ENCODE measurements at regions of chr14 and their contacts with region 1.

Region 1: DNA sequence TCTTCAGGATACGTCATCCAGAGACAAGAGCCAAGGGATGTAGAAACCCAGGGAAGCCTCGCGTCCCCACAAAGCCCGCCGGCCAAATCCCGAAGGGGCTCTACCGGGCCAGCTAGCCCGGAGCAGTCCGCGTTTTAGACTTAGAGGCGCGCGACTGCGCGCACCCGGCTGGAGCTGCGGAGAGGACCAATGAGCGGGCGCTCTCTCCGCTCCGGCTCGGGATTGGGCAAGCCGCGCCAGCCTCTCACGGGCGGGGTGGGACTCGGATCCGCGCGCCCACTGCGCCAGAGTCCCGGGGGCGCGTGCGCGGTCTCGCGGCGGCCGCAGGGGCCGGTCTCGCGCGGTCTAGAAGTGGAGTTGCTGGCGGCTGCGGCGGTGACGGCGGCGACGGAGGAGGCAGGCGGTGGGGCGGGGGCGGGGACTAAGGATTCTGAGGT is 239 bp upstream of the PALS1 start:
- DNase-seq: peak; percentile 98
- H3K4me3 ChIP-seq: peak overlapping the region; percentile 74 to 88 (median 82)
- H3K27ac ChIP-seq: peak overlapping the region; percentile 97 to 99 (median 99)
- H3K4me1 ChIP-seq: peaks cover 0 to 26% (median 17%) of the 10 kb centered on the region in 4 donors
- H3K27me3 ChIP-seq: no peaks in the 10 kb centered on the region
- CTCF ChIP-seq: no peak
- EP300 ChIP-seq: no peak
- POLR2A ChIP-seq: peak; percentile 50 to 60

Region 2: GRCh38 chr14:66507722-66508546 is 733.1 kb before region 1 on chr14 and contains the start of gene GPHN:
- intact Hi-C with region 1: loop called (anchors 2 kb)
- DNase-seq: peak; percentile 98
- H3K4me3 ChIP-seq: peak within 1 kb of the TSS; percentile 52 to 97 (median 82)
- H3K27ac ChIP-seq: peak within 1 kb of the TSS; percentile 91 to 96 (median 93)
- H3K4me1 ChIP-seq: peaks cover 0 to 19% (median 12%) of the 10 kb centered on the region in 4 donors
- H3K27me3 ChIP-seq: no peaks in the 10 kb centered on the region
- CTCF ChIP-seq: peak in 1 of 4 experiments; percentile 20
- EP300 ChIP-seq: no peak
- POLR2A ChIP-seq: peak; percentile 50 to 73
- total RNA-seq, gene GPHN: 13.4 to 20.3 (median 14.9) TPM

Region 3: DNA sequence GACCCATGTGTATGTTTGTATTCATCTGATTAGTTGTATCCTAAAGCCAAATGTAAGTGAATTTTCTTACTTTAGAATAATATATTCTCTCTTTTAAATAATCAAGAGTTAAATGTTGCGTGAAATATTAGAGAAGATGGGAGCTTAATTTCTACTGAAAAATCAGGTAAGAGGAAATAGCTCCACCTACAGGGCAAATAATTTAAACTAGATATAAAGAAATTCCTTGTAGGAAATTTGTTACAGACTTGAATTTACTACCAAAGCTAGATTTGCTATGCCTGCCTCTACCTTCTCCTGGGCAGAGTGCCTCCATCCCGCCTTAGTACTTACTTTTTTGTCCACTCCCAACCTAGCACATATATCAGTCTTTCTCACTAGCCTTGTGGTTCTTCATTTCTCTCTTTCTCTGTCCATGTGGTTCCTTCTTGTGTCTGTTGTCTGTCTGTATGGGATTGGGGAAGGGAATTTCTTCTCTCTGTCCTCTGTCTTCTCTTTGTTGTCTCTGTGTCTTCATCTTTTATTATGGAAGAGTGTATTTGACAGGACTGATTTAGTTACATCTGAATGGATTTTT is 45.0 kb after region 1 on chr14:
- intact Hi-C with region 1: loop called (anchors 5 kb)
- DNase-seq: no peak
- H3K4me3 ChIP-seq: no peak overlapping the region
- H3K27ac ChIP-seq: no peak overlapping the region
- H3K4me1 ChIP-seq: no peaks in the 10 kb centered on the region
- H3K27me3 ChIP-seq: no peaks in the 10 kb centered on the region
- CTCF ChIP-seq: peak; percentile 2 to 52 (median 40)
- EP300 ChIP-seq: no peak
- POLR2A ChIP-seq: no peak

Region 4: GRCh38 chr14:67359775-67360648 is 119.0 kb after region 1 on chr14 and contains the starts of genes ATP6V1D and EIF2S1:
- intact Hi-C with region 1: loop called (anchors 2 kb)
- DNase-seq: peak; percentile 100
- H3K4me3 ChIP-seq: peak within 1 kb of the TSS; percentile 82 to 85 (median 83)
- H3K27ac ChIP-seq: peak within 1 kb of the TSS; percentile 88 to 93 (median 90)
- H3K4me1 ChIP-seq: peaks cover 0 to 64% (median 54%) of the 10 kb centered on the region in 4 donors
- H3K27me3 ChIP-seq: no peaks in the 10 kb centered on the region
- CTCF ChIP-seq: peak; percentile 78 to 98 (median 95)
- EP300 ChIP-seq: peak in 1 of 4 donors; percentile 40
- POLR2A ChIP-seq: peak; percentile 83 to 84
- total RNA-seq, gene ATP6V1D: 65.8 to 89.9 (median 76.7) TPM
- total RNA-seq, gene EIF2S1: 31.3 to 131 (median 119) TPM

Measured in sigmoid colon (tissue), 7 donors.